Posterior cingulate gyrus (tissue), 11 donors: ENCODE measurements at regions of chr6 and their contacts with region 1.

Region 1: GRCh38 chr6:160520043-160520904 is 143.8 kb downstream of the LPA start:
- DNase-seq: peak; percentile 76 to 97 (median 85)

Region 2: GRCh38 chr6:160494576-160494975 is 25.7 kb before region 1 on chr6:
- intact Hi-C with region 1: no loop called
- DNase-seq: no peak

Region 3: DNA sequence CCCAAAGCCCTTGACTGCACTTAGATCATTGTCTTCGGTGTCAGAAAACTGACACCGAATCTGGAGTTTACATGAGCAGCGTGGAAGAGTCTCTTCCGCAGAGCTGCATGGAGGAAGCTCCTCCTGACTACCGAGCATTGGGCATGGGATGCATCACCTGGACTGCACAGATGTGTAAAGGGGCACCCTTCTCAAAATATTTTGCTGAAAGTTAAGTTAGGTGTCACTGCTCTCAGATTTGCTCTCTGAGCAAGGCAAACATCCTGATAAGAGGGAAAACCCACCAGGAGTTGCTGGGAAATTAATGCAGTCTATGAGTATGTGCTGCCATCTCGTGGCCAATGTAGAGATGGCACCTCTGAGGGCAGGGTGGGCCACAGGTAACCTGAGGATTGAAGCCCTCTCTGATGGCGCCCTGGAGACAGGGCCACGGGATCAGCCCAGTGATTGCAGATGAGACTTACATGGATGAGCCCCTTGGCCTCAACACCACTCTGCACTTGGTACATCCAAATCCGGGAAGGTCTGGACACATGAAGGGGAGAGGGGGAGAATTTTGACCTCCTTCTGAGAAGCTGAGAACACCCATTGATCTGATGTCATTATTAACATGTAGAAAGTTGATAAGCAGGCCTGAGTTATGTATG is 13.9 kb after region 1 on chr6:
- intact Hi-C with region 1: loop called (anchors 1 kb)
- DNase-seq: peak in 9 of 10 donors; percentile 24 to 90 (median 66)

Region 4: GRCh38 chr6:160766989-160767660 is 246.9 kb after region 1 on chr6:
- intact Hi-C with region 1: loop called (anchors 2 kb)
- DNase-seq: peak; percentile 61 to 97 (median 82)